Activated naive CD8-positive, alpha-beta T cell treated with anti-CD3 and anti-CD28 coated beads, Interleukin-2, amount 10 ng/mL, durations not matched to agents 7 days and 5 days (primary cell): ENCODE measurements at regions of chr4 and their contacts with region 1.

Region 1: DNA sequence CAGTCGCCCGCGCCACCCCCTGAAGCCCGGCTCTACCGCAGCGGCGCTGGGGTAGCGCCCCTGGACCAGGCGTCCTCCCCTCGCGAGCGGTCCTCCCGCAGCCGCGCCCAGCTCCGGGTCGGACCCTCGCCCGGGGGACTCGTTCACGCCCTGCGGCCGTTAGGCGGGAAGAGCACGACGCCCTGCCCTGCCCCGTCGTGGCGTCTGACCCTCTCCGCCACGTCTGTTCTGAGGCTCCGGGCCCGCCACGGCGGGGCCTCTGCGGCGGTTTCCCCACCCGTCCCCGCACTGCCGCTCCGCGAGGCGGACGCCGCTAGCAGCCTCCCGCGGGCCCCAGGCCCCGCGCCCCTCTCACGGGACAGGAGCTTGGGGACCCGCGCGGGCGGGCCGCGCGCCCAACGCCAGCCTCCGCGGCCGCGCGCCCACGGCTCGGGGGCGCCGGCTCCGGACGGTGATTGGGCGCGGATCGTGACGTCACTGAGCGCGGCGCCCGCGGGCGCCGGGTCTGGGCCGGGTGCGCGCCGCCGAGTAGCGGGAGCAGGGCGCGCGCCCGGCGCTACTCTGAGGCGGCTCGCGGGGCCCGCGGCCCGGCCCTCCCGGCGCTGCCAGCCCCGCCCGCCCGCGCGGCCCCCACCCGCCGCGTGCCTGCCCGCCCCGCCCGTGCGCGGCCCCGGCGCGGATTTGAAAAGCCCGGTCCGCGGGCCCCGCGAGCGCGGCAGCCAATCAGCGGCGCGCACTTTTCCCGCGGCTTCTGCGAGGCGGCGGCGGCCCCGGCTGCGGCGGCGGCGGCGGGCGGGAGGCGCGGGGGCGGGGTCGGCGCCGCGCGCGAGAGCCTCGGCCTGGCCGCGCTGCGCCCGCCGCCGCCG is at the start of gene NSD2:
- DNase-seq: peak; percentile 95
- ATAC-seq: peak; percentile 64
- H3K4me3 Mint-ChIP-seq: peak within 1 kb of the TSS; percentile 99
- H3K27ac Mint-ChIP-seq: peak within 1 kb of the TSS; percentile 99
- H3K4me1 Mint-ChIP-seq: peaks cover 28% of the 10 kb centered on the region
- H3K27me3 Mint-ChIP-seq: no peaks in the 10 kb centered on the region
- total RNA-seq, gene NSD2: 218 to 231 TPM

Region 2: DNA sequence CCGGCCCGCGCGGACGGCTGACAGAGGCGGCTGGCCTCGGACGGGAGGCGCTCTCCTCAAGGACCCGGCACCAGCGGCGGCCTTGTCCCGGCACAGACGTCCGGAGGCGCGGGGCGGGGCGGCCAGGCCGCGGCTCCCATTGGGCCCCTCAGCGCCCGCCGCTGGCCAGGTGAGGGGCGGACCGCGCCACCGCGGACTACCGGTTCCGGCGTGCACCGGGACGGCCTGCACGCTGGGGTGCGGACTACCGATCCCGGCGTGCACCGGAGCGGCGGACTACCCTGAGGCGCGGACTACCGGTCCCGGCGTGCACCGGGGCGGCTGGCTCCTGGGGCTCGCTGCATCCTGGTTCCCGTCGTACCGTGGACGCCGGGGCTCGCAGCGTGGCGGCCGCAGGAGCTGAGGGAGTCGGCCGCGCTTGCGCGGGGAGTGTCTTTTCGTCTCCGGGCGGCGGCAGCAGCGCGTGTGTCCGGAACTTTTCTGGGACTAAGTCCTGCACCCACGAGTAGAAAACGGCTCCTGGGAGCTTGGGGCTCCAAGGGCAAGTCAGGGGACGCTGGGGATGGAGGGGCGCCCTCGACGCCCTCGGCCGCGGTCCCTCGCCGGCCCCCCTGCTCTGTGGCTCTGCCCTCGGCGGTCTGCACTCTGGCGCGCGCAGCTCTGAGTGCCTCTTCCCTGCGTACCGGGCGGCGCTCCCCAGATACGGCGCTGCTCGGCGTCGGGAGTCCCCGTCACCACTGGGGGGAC is 14.6 kb before region 1 on chr4 and contains the start of gene LETM1:
- POLR2A ChIA-PET with region 1: interaction called, 49 read pairs
- DNase-seq: peak; percentile 94
- ATAC-seq: peak; percentile 96
- H3K4me3 Mint-ChIP-seq: peak within 1 kb of the TSS; percentile 85
- H3K27ac Mint-ChIP-seq: peak within 1 kb of the TSS; percentile 78
- H3K4me1 Mint-ChIP-seq: peaks cover 28% of the 10 kb centered on the region
- H3K27me3 Mint-ChIP-seq: no peaks in the 10 kb centered on the region
- total RNA-seq, gene LETM1: 44.0 to 45.8 TPM

Region 3: DNA sequence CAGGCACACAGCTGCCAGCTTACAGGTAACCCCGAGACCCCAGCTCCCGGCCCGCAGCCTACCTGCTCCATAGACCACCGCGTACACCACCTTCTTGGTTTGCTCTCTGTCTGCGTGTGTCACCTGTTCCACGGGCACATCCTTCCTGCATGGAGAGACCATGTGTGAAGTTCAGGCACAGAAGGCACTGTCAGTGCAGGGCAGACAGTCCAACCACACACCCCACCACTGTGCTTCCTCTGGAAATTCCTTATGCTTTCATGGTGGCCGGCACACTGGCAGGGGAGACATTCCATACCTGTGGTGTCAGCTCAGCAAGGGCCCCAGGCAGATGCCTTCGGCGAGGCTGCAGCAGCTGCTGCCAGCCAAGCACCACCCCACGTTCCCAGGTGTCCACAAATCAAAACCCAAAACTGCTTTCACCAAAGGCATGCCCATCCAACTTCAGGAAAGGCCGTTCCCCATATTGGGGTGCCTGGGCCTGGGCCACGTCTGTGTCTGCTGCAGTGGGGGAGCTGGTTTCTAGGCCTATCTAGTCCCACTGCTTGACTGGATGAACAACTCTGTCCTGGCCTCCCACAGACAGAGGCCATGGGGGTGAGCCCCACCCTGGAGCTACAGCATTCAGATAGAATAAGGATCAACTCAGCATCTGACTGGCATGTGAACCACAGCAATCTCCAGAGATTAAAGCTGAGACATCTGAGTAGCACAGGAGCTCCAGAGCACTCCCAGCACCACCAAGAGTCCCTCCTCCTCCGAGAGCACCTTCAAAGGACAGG is 225.2 kb after region 1 on chr4:
- POLR2A ChIA-PET with region 1: no interaction called
- DNase-seq: no peak
- ATAC-seq: no peak
- H3K4me3 Mint-ChIP-seq: no peak overlapping the region
- H3K27ac Mint-ChIP-seq: no peak overlapping the region
- H3K4me1 Mint-ChIP-seq: no peaks in the 10 kb centered on the region
- H3K27me3 Mint-ChIP-seq: peaks cover 16% of the 10 kb centered on the region